A549 (cell line): ENCODE measurements at regions of chr21 and their contacts with region 1.

Region 1: DNA sequence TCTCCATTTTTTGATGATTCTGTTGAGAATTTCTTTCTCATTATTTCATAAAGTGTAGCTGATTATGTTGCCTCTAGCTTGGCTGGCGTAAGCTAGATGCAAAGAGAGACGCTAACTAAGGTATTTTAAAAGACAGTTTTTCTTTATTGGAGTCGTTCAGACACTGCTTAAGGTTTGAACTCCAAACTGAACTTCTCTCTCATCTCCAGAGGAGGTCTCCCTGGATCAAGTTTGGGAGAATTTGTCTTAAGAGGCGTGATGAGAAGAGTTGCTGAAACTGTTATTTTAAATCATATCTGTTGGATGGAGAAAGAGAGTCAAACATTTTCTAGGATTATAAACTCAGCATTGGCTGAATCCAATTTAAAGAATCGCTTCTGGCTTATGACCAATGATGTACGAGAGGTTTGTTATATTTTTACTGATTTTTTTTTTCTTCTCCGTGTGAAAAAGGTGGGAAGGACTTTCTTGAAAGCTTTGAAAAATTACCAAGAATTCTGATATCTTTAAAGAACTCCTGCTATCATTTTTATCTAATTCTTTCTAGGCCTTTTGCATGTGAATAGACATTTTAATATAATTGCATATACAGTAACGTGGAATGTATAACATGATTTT is 34.0 kb downstream of the MAP3K7CL start:
- DNase-seq: peak; percentile 15 to 78
- ATAC-seq: peak; percentile 85 to 87
- H3K4me3 ChIP-seq: no peak overlapping the region
- H3K27ac ChIP-seq: no peak overlapping the region
- H3K4me1 ChIP-seq: peaks cover 12% of the 10 kb centered on the region
- CTCF ChIP-seq: peak; percentile 75
- EP300 ChIP-seq: no peak
- POLR2A ChIP-seq: no peak
- RAD21 ChIP-seq: peak; percentile 90

Region 2: GRCh38 chr21:29175408-29176134 is 11.1 kb after region 1 on chr21:
- CTCF ChIA-PET with region 1: interaction called, 13 read pairs
- POLR2A ChIA-PET with region 1: no interaction called
- DNase-seq: peak in 1 of 2 experiments; percentile 66
- ATAC-seq: peak; percentile 43 to 68; a peak in 3 of 6 replicates
- H3K4me3 ChIP-seq: no peak overlapping the region
- H3K27ac ChIP-seq: peak overlapping the region; percentile 33 to 41; a peak in 1 of 6 replicates
- H3K4me1 ChIP-seq: peaks cover 41% of the 10 kb centered on the region
- CTCF ChIP-seq: no peak
- EP300 ChIP-seq: no peak
- POLR2A ChIP-seq: no peak
- RAD21 ChIP-seq: no peak

Region 3: DNA sequence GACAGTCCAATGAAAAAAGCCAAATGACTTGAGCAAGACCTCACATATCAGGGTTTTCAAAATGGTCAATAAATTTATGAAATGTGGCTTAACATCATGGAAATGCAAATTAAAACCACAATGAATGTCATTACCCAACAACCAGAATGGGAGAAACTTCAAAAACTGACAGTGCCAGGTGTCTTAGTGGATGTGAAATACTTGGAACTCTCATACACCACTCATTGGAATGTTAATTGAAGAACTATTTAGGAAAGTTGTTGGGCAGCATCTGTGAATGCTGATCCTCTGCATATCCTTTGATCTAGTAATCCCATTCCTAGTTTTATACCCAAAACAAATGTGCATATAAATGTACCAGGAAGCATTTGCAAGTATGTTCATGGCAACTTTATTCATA is 115.1 kb after region 1 on chr21:
- CTCF ChIA-PET with region 1: no interaction called
- POLR2A ChIA-PET with region 1: no interaction called
- DNase-seq: no peak
- ATAC-seq: no peak
- H3K4me3 ChIP-seq: no peak overlapping the region
- H3K27ac ChIP-seq: no peak overlapping the region
- H3K4me1 ChIP-seq: no peaks in the 10 kb centered on the region
- CTCF ChIP-seq: no peak
- EP300 ChIP-seq: no peak
- POLR2A ChIP-seq: no peak
- RAD21 ChIP-seq: no peak

Region 4: GRCh38 chr21:29298348-29299045 is 134.1 kb after region 1 on chr21 and contains the start of gene BACH1:
- CTCF ChIA-PET with region 1: interaction called, 35 read pairs
- POLR2A ChIA-PET with region 1: interaction called, 4 read pairs
- DNase-seq: peak; percentile 49 to 76
- ATAC-seq: peak; percentile 88 to 95; a peak in 5 of 6 replicates
- H3K4me3 ChIP-seq: peak within 1 kb of the TSS; percentile 94
- H3K27ac ChIP-seq: peak within 1 kb of the TSS; percentile 88 to 98
- H3K4me1 ChIP-seq: peaks cover 38% of the 10 kb centered on the region
- CTCF ChIP-seq: peak; percentile 39
- EP300 ChIP-seq: no peak
- POLR2A ChIP-seq: peak; percentile 55
- RAD21 ChIP-seq: peak in 1 of 2 experiments; percentile 67; a peak in 2 of 5 replicates
- polyA plus RNA-seq, gene BACH1: 18.7 and 21.4 TPM in 2 replicates

Region 5: GRCh38 chr21:29360799-29361765 is 196.6 kb after region 1 on chr21:
- CTCF ChIA-PET with region 1: interaction called, 11 read pairs
- POLR2A ChIA-PET with region 1: no interaction called
- DNase-seq: peak in 1 of 2 experiments; percentile 12
- ATAC-seq: no peak
- H3K4me3 ChIP-seq: no peak overlapping the region
- H3K27ac ChIP-seq: no peak overlapping the region
- H3K4me1 ChIP-seq: no peaks in the 10 kb centered on the region
- CTCF ChIP-seq: no peak
- EP300 ChIP-seq: no peak
- POLR2A ChIP-seq: no peak
- RAD21 ChIP-seq: no peak